ENCODE measurements at regions of chr16 and their contacts with region 1.

Region 1: GRCh38 chr16:89256651-89257254 is 39.2 kb downstream of the ZNF778 start:
- DNase-seq: peak; percentile 59
- ATAC-seq: peak; percentile 77
- H3K4me3 ChIP-seq: peak overlapping the region in 4 of 5 experiments; percentile 12 to 29 (median 16)
- H3K4me3 Mint-ChIP-seq: peak overlapping the region; percentile 59
- H3K27ac ChIP-seq: no peak overlapping the region
- H3K27ac Mint-ChIP-seq: peak overlapping the region; percentile 6
- H3K4me1 ChIP-seq: peaks cover 16 to 19% of the 10 kb centered on the region in 2 donors
- H3K4me1 Mint-ChIP-seq: peaks cover 20% of the 10 kb centered on the region
- H3K27me3 ChIP-seq: peaks cover 0 to 27% (median 16%) of the 10 kb centered on the region in 4 experiments
- H3K27me3 Mint-ChIP-seq: peaks cover 28% of the 10 kb centered on the region
- CTCF ChIP-seq: no peak

Region 2: DNA sequence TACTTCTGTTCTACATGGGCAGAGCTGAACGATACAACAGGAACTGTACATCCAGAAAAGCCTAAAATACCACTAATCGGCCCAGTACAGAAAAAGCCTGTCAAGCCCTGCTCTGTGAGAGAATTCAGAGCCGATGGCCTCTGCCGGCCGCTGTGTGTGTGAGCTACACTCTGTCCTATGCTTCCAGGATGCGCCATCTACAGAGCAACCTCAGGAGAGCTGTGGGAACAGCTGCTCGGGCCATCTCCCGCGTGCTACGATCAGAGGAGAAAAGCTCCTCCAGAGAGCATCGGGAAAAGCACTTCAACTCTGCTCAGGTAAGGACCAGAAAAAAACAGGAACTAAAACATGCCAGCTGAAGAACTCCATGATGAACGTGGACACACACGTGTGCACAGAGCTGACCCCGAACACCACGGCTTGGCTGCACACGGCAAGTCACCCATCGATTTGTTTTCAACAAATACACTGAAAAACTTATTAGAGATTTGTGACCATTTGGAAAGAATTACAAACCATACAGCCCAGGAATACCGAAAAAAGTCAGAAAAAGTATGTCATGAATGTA is 117.7 kb after region 1 on chr16:
- CTCF ChIA-PET with region 1: no interaction called
- POLR2A ChIA-PET with region 1: no interaction called
- intact Hi-C with region 1: loop called (anchors 10 kb)
- DNase-seq: peak; percentile 64
- ATAC-seq: peak; percentile 44
- H3K4me3 ChIP-seq: peak overlapping the region in 1 of 5 experiments; percentile 39
- H3K4me3 Mint-ChIP-seq: peak overlapping the region; percentile 85
- H3K27ac ChIP-seq: peak overlapping the region in 1 of 2 donors; percentile 10
- H3K27ac Mint-ChIP-seq: peak overlapping the region; percentile 82
- H3K4me1 ChIP-seq: peaks cover 31 to 51% of the 10 kb centered on the region in 2 donors
- H3K4me1 Mint-ChIP-seq: peaks cover 83% of the 10 kb centered on the region
- H3K27me3 ChIP-seq: no peaks in the 10 kb centered on the region
- H3K27me3 Mint-ChIP-seq: no peaks in the 10 kb centered on the region
- CTCF ChIP-seq: no peak

Measured in B cell (primary cell).